Activated CD4-positive, alpha-beta memory T cell treated with anti-CD3 and anti-CD28 coated beads for 36 hours (primary cell): ENCODE measurements at regions of chr5 and their contacts with region 1.

Region 1: DNA sequence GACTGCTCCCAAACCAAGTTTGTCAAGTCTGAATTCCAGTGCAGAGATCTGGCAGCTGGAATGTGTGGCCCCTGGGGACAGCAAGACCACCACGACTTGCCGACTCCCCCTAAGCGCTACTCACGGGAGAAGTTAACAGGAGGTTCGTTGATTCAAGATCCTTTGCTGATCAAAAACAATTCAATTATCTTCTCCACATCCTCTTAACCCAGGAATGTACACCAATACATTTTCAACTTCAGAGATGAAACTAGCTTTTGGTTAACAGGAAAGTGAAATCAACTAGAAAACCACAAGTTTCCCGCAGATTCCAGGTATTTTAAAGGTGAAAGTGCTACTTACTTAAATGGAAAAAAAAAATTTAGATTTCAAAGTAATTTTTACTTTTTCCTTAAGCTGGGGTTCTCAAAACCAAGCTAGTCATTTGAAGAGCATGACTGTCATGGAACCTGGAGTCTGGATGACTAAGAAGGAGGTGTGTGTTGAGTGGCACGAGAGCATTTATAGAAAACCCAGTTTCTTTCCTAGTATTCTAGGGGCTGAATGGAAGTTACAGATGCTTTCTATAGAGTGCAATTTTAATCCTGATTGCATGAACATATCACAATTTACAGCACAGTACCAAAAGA is 257.5 kb upstream of the PANK3 start:
- DNase-seq: peak; percentile 27
- H3K4me3 Mint-ChIP-seq: peak overlapping the region; percentile 64
- H3K27ac Mint-ChIP-seq: peak overlapping the region; percentile 84
- H3K4me1 Mint-ChIP-seq: peaks cover 27% of the 10 kb centered on the region
- H3K27me3 Mint-ChIP-seq: peaks cover 16% of the 10 kb centered on the region

Region 2: GRCh38 chr5:168802337-168802736 is 34.4 kb before region 1 on chr5:
- CTCF ChIA-PET with region 1: interaction called, 3 read pairs
- POLR2A ChIA-PET with region 1: interaction called, 9 read pairs
- intact Hi-C with region 1: loop called (anchors 1 kb)
- DNase-seq: peak; percentile 60
- H3K4me3 Mint-ChIP-seq: peak overlapping the region; percentile 45
- H3K27ac Mint-ChIP-seq: peak overlapping the region; percentile 81
- H3K4me1 Mint-ChIP-seq: peaks cover 32% of the 10 kb centered on the region
- H3K27me3 Mint-ChIP-seq: peaks cover 13% of the 10 kb centered on the region

Region 3: GRCh38 chr5:168816661-168817060 is 20.1 kb before region 1 on chr5:
- CTCF ChIA-PET with region 1: no interaction called
- POLR2A ChIA-PET with region 1: no interaction called
- intact Hi-C with region 1: no loop called
- DNase-seq: no peak
- H3K4me3 Mint-ChIP-seq: no peak overlapping the region
- H3K27ac Mint-ChIP-seq: no peak overlapping the region
- H3K4me1 Mint-ChIP-seq: peaks cover 3% of the 10 kb centered on the region
- H3K27me3 Mint-ChIP-seq: peaks cover 9% of the 10 kb centered on the region

Region 4: GRCh38 chr5:168851902-168852321 is 15.2 kb after region 1 on chr5:
- CTCF ChIA-PET with region 1: no interaction called
- POLR2A ChIA-PET with region 1: no interaction called
- intact Hi-C with region 1: loop called (anchors 1 kb)
- DNase-seq: peak; percentile 49
- H3K4me3 Mint-ChIP-seq: peak overlapping the region; percentile 1
- H3K27ac Mint-ChIP-seq: peak overlapping the region; percentile 65
- H3K4me1 Mint-ChIP-seq: peaks cover 12% of the 10 kb centered on the region
- H3K27me3 Mint-ChIP-seq: peaks cover 10% of the 10 kb centered on the region

Region 5: GRCh38 chr5:168947212-168947868 is 110.6 kb after region 1 on chr5:
- CTCF ChIA-PET with region 1: no interaction called
- POLR2A ChIA-PET with region 1: interaction called, 3 read pairs
- intact Hi-C with region 1: loop called (anchors 1 kb)
- DNase-seq: peak; percentile 57
- H3K4me3 Mint-ChIP-seq: no peak overlapping the region
- H3K27ac Mint-ChIP-seq: no peak overlapping the region
- H3K4me1 Mint-ChIP-seq: peaks cover 13% of the 10 kb centered on the region
- H3K27me3 Mint-ChIP-seq: no peaks in the 10 kb centered on the region

Region 6: DNA sequence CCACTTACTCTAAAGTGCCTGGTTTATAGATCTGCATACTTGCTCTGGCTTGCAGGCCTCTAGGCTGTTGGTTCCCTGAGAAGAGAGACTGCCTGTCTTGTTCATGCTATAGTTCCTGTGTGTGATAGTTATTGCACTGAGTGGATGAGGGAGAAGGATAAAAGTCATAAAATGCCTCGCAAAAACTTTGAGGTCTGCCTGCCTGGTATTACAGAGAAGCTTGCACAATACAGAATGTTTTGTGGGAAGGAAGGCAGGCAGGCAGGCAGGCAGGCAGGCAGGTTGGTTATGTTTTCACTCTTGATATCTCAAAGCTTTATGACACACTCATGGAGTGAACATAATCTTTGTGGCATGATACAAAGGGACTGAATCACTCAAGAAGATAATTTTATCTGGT is 177.1 kb after region 1 on chr5:
- CTCF ChIA-PET with region 1: no interaction called
- POLR2A ChIA-PET with region 1: no interaction called
- intact Hi-C with region 1: no loop called
- DNase-seq: no peak
- H3K4me3 Mint-ChIP-seq: no peak overlapping the region
- H3K27ac Mint-ChIP-seq: no peak overlapping the region
- H3K4me1 Mint-ChIP-seq: no peaks in the 10 kb centered on the region
- H3K27me3 Mint-ChIP-seq: peaks cover 19% of the 10 kb centered on the region